MCF 10A (cell line): ENCODE measurements at regions of chr19 and their contacts with region 1.

Region 1: DNA sequence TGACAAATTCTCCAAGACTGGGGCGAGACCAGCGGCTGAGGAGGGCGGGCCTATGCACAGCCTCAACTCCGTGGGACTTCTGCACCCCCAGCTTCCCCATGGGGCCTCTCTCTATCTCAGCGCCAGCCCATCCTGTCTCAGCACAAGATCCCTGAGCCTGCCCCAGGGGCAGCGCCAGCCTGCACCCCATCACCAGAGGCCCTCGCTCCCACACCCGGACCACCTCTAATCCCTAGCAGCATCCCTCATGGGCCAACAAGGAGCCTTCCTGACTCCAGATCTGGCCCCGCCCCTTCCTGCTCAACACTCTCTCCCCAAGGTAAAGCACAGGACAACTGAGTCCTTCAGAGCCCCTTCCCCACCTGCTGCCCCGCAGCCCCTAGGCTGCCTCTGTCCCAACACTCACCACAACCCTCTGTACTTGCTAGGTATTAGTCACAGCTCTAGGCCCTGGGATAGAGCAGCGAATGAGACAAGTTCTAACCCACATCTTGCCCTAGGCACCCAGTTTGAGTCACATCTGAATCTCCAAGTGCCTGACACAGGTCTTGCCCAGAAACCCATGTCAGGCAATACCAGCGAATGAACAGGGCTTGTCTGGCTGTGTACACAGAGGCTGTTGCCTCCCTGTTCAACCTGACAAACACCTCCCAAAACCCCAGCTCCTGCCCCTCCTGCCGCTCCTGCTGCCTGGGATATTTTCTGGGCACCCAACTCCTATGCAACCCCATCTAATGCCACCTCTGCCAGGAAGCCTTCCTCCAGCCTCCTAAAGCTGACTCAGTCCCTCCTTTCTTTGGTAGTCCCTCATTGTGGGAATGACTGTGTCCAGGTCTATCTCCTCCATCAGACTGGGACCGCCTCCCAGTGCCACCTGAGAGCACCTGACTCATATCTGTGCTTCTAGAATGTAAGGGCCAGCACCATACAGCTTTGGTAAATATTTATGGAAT is 18.6 kb downstream of the GRIK5 start:
- DNase-seq: peak; percentile 97
- H3K4me3 Mint-ChIP-seq: peak overlapping the region; percentile 1
- H3K27ac Mint-ChIP-seq: peak overlapping the region; percentile 86
- H3K4me1 Mint-ChIP-seq: peaks cover 31% of the 10 kb centered on the region
- H3K27me3 Mint-ChIP-seq: no peaks in the 10 kb centered on the region
- CTCF ChIP-seq: no peak

Region 2: GRCh38 chr19:41978470-41978869 is 73.0 kb before region 1 on chr19:
- CTCF ChIA-PET with region 1: no interaction called
- POLR2A ChIA-PET with region 1: no interaction called
- intact Hi-C with region 1: no loop called
- DNase-seq: no peak
- H3K4me3 Mint-ChIP-seq: no peak overlapping the region
- H3K27ac Mint-ChIP-seq: no peak overlapping the region
- H3K4me1 Mint-ChIP-seq: peaks cover 5% of the 10 kb centered on the region
- H3K27me3 Mint-ChIP-seq: no peaks in the 10 kb centered on the region
- CTCF ChIP-seq: no peak

Region 3: DNA sequence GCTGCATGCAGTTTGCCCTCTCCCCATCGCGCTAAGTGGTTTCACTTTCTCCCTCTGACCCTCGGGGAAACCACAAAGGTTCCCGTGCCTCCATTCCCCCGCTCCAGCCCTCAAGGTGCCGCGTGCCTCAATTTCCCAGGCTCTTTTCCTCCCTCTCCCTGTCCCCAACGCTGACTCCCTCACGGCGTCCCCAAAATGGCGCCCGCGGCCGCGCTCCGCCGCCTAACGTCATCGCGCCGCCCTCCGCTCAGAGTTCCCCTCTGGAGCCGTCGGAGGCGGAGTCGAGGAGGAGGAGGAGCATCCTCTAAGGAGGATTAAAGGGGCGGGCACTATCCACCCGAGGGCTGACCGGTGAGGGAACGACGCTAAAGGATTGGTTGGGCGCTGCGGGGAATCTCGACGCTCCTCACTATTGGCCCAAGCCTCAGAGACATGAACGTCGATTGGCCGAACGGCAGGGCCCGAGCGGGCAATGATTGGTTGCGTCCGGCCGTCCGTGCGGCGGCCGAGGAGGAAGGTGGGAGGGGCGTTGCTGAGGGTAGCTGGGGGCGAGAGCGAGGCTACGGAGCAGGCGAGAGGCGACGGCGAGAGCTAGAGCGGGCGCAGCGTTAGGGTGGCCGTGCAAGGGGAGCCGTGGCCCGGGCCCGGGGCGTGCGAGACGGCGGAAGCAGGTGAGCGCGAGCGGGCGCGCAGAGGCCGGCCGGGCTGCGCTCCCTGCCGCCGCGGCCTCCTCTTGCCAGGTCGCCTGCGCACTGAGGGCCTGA is 24.4 kb after region 1 on chr19 and contains the start of gene ZNF574:
- CTCF ChIA-PET with region 1: interaction called, 6 read pairs
- POLR2A ChIA-PET with region 1: interaction called, 32 read pairs
- intact Hi-C with region 1: loop called (anchors 1 kb)
- DNase-seq: peak; percentile 100
- H3K4me3 Mint-ChIP-seq: peak within 1 kb of the TSS; percentile 100
- H3K27ac Mint-ChIP-seq: peak within 1 kb of the TSS; percentile 100
- H3K4me1 Mint-ChIP-seq: peaks cover 29% of the 10 kb centered on the region
- H3K27me3 Mint-ChIP-seq: no peaks in the 10 kb centered on the region
- CTCF ChIP-seq: no peak
- total RNA-seq, gene ZNF574: 12.2 and 13.5 TPM in 2 replicates